ENCODE measurements at regions of chr11 and their contacts with region 1.

Region 1: GRCh38 chr11:114262681-114263512 is 33.3 kb upstream of the NNMT start:
- DNase-seq: peak; percentile 47
- ATAC-seq: peak; percentile 27
- H3K4me3 ChIP-seq: no peak overlapping the region
- H3K27ac ChIP-seq: no peak overlapping the region
- H3K4me1 ChIP-seq: peaks cover 22% of the 10 kb centered on the region
- H3K27me3 ChIP-seq: no peaks in the 10 kb centered on the region
- CTCF ChIP-seq: peak; percentile 57

Region 2: GRCh38 chr11:113896156-113896879 is 366.6 kb before region 1 on chr11:
- intact Hi-C with region 1: loop called (anchors 10 kb)
- DNase-seq: no peak
- ATAC-seq: peak; percentile 83
- H3K4me3 ChIP-seq: no peak overlapping the region
- H3K27ac ChIP-seq: no peak overlapping the region
- H3K4me1 ChIP-seq: no peaks in the 10 kb centered on the region
- H3K27me3 ChIP-seq: no peaks in the 10 kb centered on the region
- CTCF ChIP-seq: peak; percentile 80

Region 3: GRCh38 chr11:114036156-114036811 is 226.6 kb before region 1 on chr11:
- intact Hi-C with region 1: loop called (anchors 5 kb)
- DNase-seq: peak; percentile 93
- ATAC-seq: peak; percentile 98
- H3K4me3 ChIP-seq: peak overlapping the region; percentile 46
- H3K27ac ChIP-seq: peak overlapping the region; percentile 72
- H3K4me1 ChIP-seq: peaks cover 14% of the 10 kb centered on the region
- H3K27me3 ChIP-seq: no peaks in the 10 kb centered on the region
- CTCF ChIP-seq: peak; percentile 90

Region 4: GRCh38 chr11:114075344-114075610 is 187.6 kb before region 1 on chr11:
- intact Hi-C with region 1: no loop called
- DNase-seq: no peak
- ATAC-seq: no peak
- H3K4me3 ChIP-seq: peak overlapping the region; percentile 6
- H3K27ac ChIP-seq: no peak overlapping the region
- H3K4me1 ChIP-seq: peaks cover 97% of the 10 kb centered on the region
- H3K27me3 ChIP-seq: no peaks in the 10 kb centered on the region
- CTCF ChIP-seq: no peak

Region 5: DNA sequence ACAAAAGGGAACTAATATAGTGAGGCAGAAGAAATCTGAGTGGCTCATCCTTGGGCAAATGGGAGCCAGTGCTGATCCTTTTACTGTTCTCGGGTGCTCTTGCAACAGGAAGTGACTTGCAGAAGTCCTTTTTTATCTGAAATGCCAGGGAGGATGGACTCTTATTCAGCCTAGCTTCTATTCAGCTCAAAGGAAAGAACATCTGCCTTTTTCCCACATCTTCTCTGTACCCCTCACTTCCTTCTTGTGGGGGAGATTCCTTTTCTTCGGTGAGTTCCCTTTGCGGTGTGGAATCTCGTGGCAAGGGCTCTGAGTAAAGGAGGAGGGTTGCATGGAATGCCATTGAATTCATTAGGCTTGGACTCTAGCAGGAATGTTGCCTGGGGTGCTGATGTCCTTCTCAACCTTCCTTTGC is 127.2 kb before region 1 on chr11:
- intact Hi-C with region 1: no loop called
- DNase-seq: no peak
- ATAC-seq: peak; percentile 57
- H3K4me3 ChIP-seq: no peak overlapping the region
- H3K27ac ChIP-seq: peak overlapping the region; percentile 56
- H3K4me1 ChIP-seq: peaks cover 95% of the 10 kb centered on the region
- H3K27me3 ChIP-seq: no peaks in the 10 kb centered on the region
- CTCF ChIP-seq: no peak